Stomach (tissue), 19 donors: ENCODE measurements at regions of chr1 and their contacts with region 1.

Region 1: DNA sequence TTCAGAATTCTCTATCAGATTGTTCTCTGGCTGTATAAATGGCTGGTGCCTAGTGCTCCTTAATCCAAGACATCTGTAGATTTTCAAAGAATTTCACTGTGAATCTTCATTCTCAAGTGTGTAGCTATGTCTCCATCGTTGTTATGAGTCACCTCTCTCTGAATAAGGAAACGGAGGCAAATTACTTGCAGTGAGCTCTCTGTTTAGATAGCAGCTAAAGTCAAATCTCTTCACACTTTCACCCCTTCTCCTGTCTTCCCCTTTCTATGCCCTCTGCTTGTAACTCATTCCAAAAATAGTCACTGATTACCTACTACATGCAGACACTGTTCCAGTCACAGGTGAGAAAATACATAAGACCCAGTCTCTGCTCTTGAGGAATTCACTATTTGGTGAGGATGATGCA is 39.7 kb downstream of the CHML start:
- DNase-seq: no peak
- H3K4me3 ChIP-seq: no peak overlapping the region
- H3K27ac ChIP-seq: no peak overlapping the region
- H3K4me1 ChIP-seq: no peaks in the 10 kb centered on the region
- H3K27me3 ChIP-seq: no peaks in the 10 kb centered on the region
- CTCF ChIP-seq: no peak
- EP300 ChIP-seq: no peak
- POLR2A ChIP-seq: no peak

Region 2: GRCh38 chr1:241834733-241835377 is 234.4 kb after region 1 on chr1:
- intact Hi-C with region 1: loop called (anchors 10 kb)
- DNase-seq: peak in 1 of 2 donors; percentile 62
- H3K4me3 ChIP-seq: no peak overlapping the region
- H3K27ac ChIP-seq: no peak overlapping the region
- H3K4me1 ChIP-seq: no peaks in the 10 kb centered on the region
- H3K27me3 ChIP-seq: no peaks in the 10 kb centered on the region
- CTCF ChIP-seq: peak in 4 of 7 experiments; percentile 36 to 48 (median 41)
- EP300 ChIP-seq: no peak
- POLR2A ChIP-seq: no peak

Region 3: GRCh38 chr1:242005866-242006565 is 405.5 kb after region 1 on chr1:
- intact Hi-C with region 1: loop called (anchors 10 kb)
- DNase-seq: no peak
- H3K4me3 ChIP-seq: no peak overlapping the region
- H3K27ac ChIP-seq: no peak overlapping the region
- H3K4me1 ChIP-seq: no peaks in the 10 kb centered on the region
- H3K27me3 ChIP-seq: no peaks in the 10 kb centered on the region
- CTCF ChIP-seq: no peak
- EP300 ChIP-seq: no peak
- POLR2A ChIP-seq: no peak